ENCODE measurements at regions of chr18 and their contacts with region 1.

Region 1: GRCh38 chr18:48475635-48476549 is 62.9 kb upstream of the CTIF start:
- DNase-seq: no peak
- ATAC-seq: peak; percentile 96
- H3K4me3 ChIP-seq: no peak overlapping the region
- H3K27ac ChIP-seq: no peak overlapping the region
- H3K4me1 ChIP-seq: no peaks in the 10 kb centered on the region
- H3K27me3 ChIP-seq: no peaks in the 10 kb centered on the region
- CTCF ChIP-seq: peak; percentile 86

Region 2: GRCh38 chr18:48419277-48420022 is 56.4 kb before region 1 on chr18:
- intact Hi-C with region 1: no loop called
- DNase-seq: no peak
- ATAC-seq: no peak
- H3K4me3 ChIP-seq: no peak overlapping the region
- H3K27ac ChIP-seq: no peak overlapping the region
- H3K4me1 ChIP-seq: no peaks in the 10 kb centered on the region
- H3K27me3 ChIP-seq: peaks cover 9% of the 10 kb centered on the region
- CTCF ChIP-seq: peak; percentile 5

Region 3: GRCh38 chr18:48663931-48664847 is 188.3 kb after region 1 on chr18:
- intact Hi-C with region 1: loop called (anchors 2 kb)
- DNase-seq: peak; percentile 87
- ATAC-seq: peak; percentile 83
- H3K4me3 ChIP-seq: no peak overlapping the region
- H3K27ac ChIP-seq: no peak overlapping the region
- H3K4me1 ChIP-seq: peaks cover 19% of the 10 kb centered on the region
- H3K27me3 ChIP-seq: no peaks in the 10 kb centered on the region
- CTCF ChIP-seq: peak; percentile 82

Region 4: GRCh38 chr18:48777026-48777743 is 301.3 kb after region 1 on chr18:
- intact Hi-C with region 1: no loop called
- DNase-seq: peak; percentile 86
- ATAC-seq: peak; percentile 71
- H3K4me3 ChIP-seq: no peak overlapping the region
- H3K27ac ChIP-seq: peak overlapping the region; percentile 42
- H3K4me1 ChIP-seq: peaks cover 55% of the 10 kb centered on the region
- H3K27me3 ChIP-seq: no peaks in the 10 kb centered on the region
- CTCF ChIP-seq: peak; percentile 95

Measured in upper lobe of right lung (tissue), 1 donor.